Activated CD8-positive, alpha-beta T cell treated with anti-CD3 and anti-CD28 coated beads, Interleukin-2, amount 10 ng/mL, durations not matched to agents 7 days and 5 days (primary cell): ENCODE measurements at regions of chr21 and their contacts with region 1.

Region 1: GRCh38 chr21:29298348-29299045 is at the start of gene BACH1:
- DNase-seq: peak; percentile 88
- ATAC-seq: peak; percentile 87
- H3K4me3 Mint-ChIP-seq: peak within 1 kb of the TSS; percentile 86
- H3K27ac Mint-ChIP-seq: peak within 1 kb of the TSS; percentile 91
- H3K4me1 Mint-ChIP-seq: peaks cover 52% of the 10 kb centered on the region
- H3K27me3 Mint-ChIP-seq: no peaks in the 10 kb centered on the region
- total RNA-seq, gene BACH1: 23.5 to 23.7 TPM

Region 2: DNA sequence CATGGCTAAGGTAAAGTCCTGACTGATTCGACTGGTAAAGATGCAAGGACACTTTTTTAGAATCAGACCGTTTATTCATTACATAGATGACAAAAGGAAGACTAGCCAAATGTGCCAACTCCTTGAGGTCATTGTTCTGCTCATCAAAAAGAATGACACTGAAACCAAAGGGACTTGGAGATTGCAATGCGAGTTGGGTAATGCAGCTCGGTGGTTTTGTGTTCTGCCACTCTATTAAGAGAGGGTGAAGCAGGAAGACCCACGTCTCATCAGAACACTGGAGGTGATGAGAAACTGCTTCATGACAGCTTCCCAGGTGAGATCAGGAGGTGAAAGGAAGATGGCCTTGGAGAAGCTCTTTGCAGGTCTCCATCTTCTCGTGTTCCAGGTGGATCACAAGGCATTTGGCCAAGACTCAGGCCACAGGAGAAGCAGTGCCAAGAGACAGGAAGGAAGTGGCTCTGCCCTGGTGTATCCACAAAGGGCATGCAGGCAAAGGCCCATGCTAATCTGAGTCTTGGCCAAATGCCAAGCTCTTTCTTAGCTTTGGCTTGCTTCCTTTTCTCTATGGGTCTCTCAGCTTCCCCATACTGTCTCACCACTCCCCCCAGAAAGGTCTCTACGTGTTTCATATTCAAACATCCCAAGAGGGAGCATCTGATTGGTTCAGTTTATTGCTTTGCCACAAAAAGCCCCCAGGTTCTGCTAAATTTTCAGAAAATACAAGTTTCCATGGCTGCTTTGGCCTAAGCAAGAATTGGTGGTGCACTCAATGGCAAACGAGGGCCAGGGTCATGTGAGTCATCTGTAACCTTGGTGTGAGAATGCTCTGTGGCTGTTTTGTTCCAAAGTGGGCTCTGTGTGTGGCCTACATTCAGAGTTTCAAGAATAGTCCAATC is 219.4 kb before region 1 on chr21:
- CTCF ChIA-PET with region 1: interaction called, 5 read pairs
- POLR2A ChIA-PET with region 1: interaction called, 24 read pairs
- DNase-seq: peak; percentile 49
- ATAC-seq: peak; percentile 41
- H3K4me3 Mint-ChIP-seq: peak overlapping the region; percentile 30
- H3K27ac Mint-ChIP-seq: peak overlapping the region; percentile 90
- H3K4me1 Mint-ChIP-seq: peaks cover 47% of the 10 kb centered on the region
- H3K27me3 Mint-ChIP-seq: no peaks in the 10 kb centered on the region